ENCODE measurements at regions of chr14 and their contacts with region 1.

Region 1: DNA sequence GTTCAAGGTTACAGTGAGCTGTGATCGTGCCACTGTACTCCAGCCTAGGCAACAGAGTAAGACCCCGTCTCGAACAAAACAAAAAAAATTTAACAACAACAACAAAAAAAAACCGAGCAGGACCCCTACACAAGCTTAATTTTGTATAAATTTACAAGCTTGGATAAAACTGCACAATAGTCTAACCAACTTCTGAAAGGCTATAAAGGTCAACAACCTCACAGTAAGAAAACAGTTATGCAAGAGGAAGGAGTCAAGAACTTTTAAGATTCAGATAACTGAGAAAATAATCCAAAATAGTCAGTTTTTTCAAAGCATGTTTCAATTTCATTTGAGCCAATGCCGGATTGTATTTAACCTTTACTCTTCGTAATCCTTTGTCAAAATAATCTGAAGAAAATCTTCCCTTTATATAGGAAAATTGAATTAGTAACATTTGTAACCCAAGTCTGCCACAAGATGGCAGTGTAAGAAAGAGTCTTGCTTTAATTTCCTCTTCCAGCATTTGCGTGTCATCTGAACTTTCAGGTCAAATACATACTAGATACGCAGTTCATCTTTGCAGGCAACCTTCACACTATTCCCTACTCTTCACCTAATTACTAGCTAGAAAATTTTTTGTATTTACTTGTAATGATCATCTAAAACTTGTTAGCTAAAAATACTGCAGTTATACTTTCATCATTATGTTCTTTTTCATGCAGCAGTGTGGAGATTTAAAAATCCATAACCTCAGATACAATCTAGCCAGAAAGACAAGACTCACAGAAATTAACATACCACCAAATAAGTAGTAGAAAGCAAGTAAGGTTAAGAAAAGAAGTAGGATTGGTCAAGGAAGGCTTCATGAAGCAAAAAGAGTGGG is 5.8 kb downstream of the CCNB1IP1 start:
- DNase-seq: no peak
- H3K4me3 Mint-ChIP-seq: no peak overlapping the region
- H3K27ac Mint-ChIP-seq: peak overlapping the region; percentile 17
- H3K4me1 Mint-ChIP-seq: peaks cover 39% of the 10 kb centered on the region
- H3K27me3 Mint-ChIP-seq: no peaks in the 10 kb centered on the region

Region 2: GRCh38 chr14:20343092-20343861 is 16.0 kb after region 1 on chr14 and contains the start of gene PARP2:
- CTCF ChIA-PET with region 1: interaction called, 30 read pairs
- DNase-seq: peak; percentile 94
- H3K4me3 Mint-ChIP-seq: peak within 1 kb of the TSS; percentile 92
- H3K27ac Mint-ChIP-seq: peak within 1 kb of the TSS; percentile 96
- H3K4me1 Mint-ChIP-seq: peaks cover 28% of the 10 kb centered on the region
- H3K27me3 Mint-ChIP-seq: peaks cover 21% of the 10 kb centered on the region

Region 3: DNA sequence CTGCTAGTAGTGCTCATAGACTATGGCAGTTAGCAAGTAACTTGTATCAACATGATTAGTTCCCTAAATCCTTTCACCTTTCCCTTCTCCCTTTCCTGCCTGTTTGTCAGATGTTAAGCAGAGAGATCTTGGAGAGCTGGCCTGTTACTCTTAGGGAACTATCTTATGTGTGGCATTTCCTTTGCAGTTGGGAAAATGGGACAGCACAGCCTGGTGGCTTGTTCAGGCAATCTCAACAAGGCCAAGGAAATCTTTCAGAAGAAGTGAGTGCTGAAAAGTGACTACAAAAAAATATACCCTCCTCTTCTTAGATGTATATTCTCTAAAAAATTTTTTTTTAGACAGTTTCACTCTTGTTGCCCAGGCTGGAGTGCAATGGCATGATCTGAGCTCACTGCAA is 23.6 kb after region 1 on chr14:
- CTCF ChIA-PET with region 1: interaction called, 19 read pairs
- DNase-seq: no peak
- H3K4me3 Mint-ChIP-seq: no peak overlapping the region
- H3K27ac Mint-ChIP-seq: no peak overlapping the region
- H3K4me1 Mint-ChIP-seq: peaks cover 6% of the 10 kb centered on the region
- H3K27me3 Mint-ChIP-seq: no peaks in the 10 kb centered on the region